A673 (cell line): ENCODE measurements at regions of chr4 and their contacts with region 1.

Region 1: DNA sequence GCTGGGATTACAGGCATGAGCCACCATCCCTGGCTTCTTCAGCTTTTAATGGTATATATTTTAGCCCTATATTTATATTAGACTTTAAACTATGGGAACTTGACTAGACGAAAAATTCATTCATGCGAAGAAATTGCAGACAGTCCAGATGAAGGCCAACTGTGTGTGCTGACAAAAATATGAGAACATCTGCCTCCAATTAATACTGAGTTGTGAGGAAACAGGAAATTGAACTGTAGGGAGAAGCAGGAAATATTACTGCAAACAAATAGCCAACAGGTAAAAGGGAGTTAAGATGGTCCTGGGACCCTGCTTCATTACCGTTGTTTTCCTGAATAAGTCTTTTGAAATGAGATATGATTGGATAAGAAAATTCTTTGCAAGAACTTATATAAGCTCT is 26.3 kb downstream of the MGARP start:
- DNase-seq: peak; percentile 67
- H3K4me3 ChIP-seq: no peak overlapping the region
- H3K27ac ChIP-seq: peak overlapping the region; percentile 78
- H3K4me1 ChIP-seq: peaks cover 15% of the 10 kb centered on the region
- H3K27me3 ChIP-seq: no peaks in the 10 kb centered on the region
- CTCF ChIP-seq: no peak

Region 2: DNA sequence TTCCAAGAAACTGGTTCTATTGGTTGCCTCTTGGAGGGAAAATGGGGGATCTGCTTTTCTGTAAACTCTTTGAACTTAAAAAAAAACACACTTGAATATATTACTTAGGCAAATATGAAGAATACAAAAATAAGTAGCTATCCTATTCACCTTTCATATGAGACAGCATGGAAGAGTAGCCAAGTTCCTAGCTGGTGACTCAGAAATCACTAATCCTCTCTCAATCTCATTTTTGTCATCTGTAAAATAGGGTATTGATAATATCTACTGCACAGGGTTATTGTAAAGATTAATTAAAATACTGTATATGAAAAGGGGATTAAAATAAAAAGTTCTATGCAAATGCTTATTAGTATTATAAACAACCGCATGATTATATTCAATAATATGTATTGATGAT is 13.6 kb after region 1 on chr4:
- CTCF ChIA-PET with region 1: no interaction called
- POLR2A ChIA-PET with region 1: interaction called, 13 read pairs
- intact Hi-C with region 1: no loop called
- DNase-seq: no peak
- H3K4me3 ChIP-seq: no peak overlapping the region
- H3K27ac ChIP-seq: no peak overlapping the region
- H3K4me1 ChIP-seq: peaks cover 16% of the 10 kb centered on the region
- H3K27me3 ChIP-seq: no peaks in the 10 kb centered on the region
- CTCF ChIP-seq: no peak